Activated T-helper 2 cell treated with anti-CD3 and anti-CD28 coated beads, Interferon-gamma antibody, Interleukin-2, Interleukin-4, amounts not matched to agents 10 μg/mL and 5 μg/mL and 100 μg/mL, durations not matched to agents 14 hours and 24 hours and 36 hours (primary cell): ENCODE measurements at regions of chr7 and their contacts with region 1.

Region 1: GRCh38 chr7:155190688-155191087 is 107.0 kb upstream of the INSIG1 start:
- DNase-seq: peak; percentile 51
- H3K4me3 Mint-ChIP-seq: peak overlapping the region; percentile 2
- H3K27ac Mint-ChIP-seq: no peak overlapping the region
- H3K4me1 Mint-ChIP-seq: peaks cover 41% of the 10 kb centered on the region
- H3K27me3 Mint-ChIP-seq: no peaks in the 10 kb centered on the region

Region 2: GRCh38 chr7:155263332-155264143 is 72.8 kb after region 1 on chr7:
- intact Hi-C with region 1: loop called (anchors 1 kb)
- DNase-seq: no peak
- H3K4me3 Mint-ChIP-seq: no peak overlapping the region
- H3K27ac Mint-ChIP-seq: no peak overlapping the region
- H3K4me1 Mint-ChIP-seq: no peaks in the 10 kb centered on the region
- H3K27me3 Mint-ChIP-seq: peaks cover 2% of the 10 kb centered on the region

Region 3: DNA sequence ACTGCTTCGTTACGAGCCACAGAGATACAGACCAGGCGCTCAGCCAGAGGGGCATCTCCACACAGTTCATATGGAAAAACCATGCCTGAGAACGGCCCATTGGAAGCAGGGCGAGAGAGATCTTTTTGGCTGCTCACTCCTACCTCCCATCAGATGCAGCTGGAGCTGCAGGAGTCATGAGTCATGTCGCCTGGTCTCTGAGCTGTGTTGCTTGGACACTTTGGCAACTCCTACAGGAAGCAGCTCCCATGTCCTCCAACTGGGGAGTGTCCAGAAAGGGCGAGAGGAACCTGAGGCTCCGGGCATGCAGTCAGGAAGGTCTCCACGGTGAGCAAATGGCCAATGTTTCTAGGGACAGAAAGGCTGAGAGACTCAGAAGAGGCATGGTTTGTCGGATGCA is 131.8 kb after region 1 on chr7:
- intact Hi-C with region 1: no loop called
- DNase-seq: no peak
- H3K4me3 Mint-ChIP-seq: no peak overlapping the region
- H3K27ac Mint-ChIP-seq: no peak overlapping the region
- H3K4me1 Mint-ChIP-seq: no peaks in the 10 kb centered on the region
- H3K27me3 Mint-ChIP-seq: peaks cover 7% of the 10 kb centered on the region

Region 4: GRCh38 chr7:155344600-155345433 is 154.1 kb after region 1 on chr7:
- intact Hi-C with region 1: loop called (anchors 1 kb)
- DNase-seq: peak; percentile 75
- H3K4me3 Mint-ChIP-seq: peak overlapping the region; percentile 68
- H3K27ac Mint-ChIP-seq: no peak overlapping the region
- H3K4me1 Mint-ChIP-seq: peaks cover 12% of the 10 kb centered on the region
- H3K27me3 Mint-ChIP-seq: peaks cover 19% of the 10 kb centered on the region